Common myeloid progenitor, CD34-positive (primary cell): ENCODE measurements at regions of chr21 and their contacts with region 1.

Region 1: DNA sequence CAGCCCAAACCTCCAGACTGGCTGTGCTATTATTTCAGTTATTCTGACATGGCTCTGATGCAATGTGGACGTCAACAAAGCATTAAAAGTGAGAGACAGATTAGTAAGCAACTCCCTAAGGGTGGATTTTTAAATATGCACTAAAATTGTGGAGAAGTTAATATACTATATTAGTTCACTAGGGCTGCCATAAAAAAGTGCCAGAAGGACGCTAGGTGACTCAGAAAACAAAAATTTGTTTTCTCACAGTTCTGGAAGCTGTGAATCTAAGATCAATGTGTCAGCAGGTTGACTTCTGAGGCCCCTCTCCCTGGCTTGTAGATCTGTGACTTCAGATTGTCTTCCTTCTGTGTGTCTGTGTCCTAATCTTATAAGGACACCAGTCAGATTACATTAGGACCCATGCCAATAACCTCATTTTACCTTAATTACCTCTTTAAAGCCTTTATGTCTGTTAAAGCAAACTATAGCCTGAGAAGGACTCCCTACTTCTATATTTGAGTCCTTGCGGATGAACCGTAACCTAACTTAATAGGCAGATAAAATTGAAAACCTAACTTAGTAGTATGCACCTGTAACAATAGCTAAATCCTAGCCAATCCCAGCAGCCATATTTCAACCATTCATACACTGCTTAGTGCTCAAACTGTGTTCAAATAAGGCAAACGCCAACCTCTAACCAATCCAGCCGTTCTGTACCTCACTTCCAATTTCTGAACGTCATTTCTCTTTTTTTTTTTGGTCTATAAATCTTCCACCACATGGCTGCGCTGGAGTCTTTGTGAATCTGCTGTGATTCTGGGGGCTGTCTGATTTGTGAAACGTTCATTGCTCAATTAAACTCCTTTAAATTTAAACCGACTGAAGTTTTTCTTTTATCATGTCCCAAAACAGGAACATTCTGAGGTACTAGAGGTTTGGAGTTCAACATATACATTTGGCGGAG is 65.8 kb upstream of the BACH1 start:
- DNase-seq: peak; percentile 38 to 82 (median 76)
- H3K4me3 ChIP-seq: no peak overlapping the region
- H3K27ac ChIP-seq: no peak overlapping the region
- H3K4me1 ChIP-seq: peaks cover 25 to 43% (median 39%) of the 10 kb centered on the region in 4 experiments
- H3K27me3 ChIP-seq: no peaks in the 10 kb centered on the region

Region 2: GRCh38 chr21:29315131-29315749 is 82.4 kb after region 1 on chr21:
- CTCF ChIA-PET with region 1: interaction called, 12 read pairs
- POLR2A ChIA-PET with region 1: no interaction called
- DNase-seq: no peak
- H3K4me3 ChIP-seq: no peak overlapping the region
- H3K27ac ChIP-seq: peak overlapping the region in 1 of 2 experiments; percentile 64
- H3K4me1 ChIP-seq: peaks cover 4 to 43% (median 25%) of the 10 kb centered on the region in 4 experiments
- H3K27me3 ChIP-seq: no peaks in the 10 kb centered on the region